ENCODE measurements at regions of chr6 and their contacts with region 1.

Region 1: GRCh38 chr6:166382933-166383801 is at the start of gene MPC1:
- DNase-seq: peak; percentile 95
- ATAC-seq: peak; percentile 93
- H3K4me3 ChIP-seq: peak within 1 kb of the TSS; percentile 70 to 95 (median 83)
- H3K4me3 Mint-ChIP-seq: peak within 1 kb of the TSS; percentile 97
- H3K27ac ChIP-seq: peak within 1 kb of the TSS; percentile 59 to 80
- H3K27ac Mint-ChIP-seq: peak within 1 kb of the TSS; percentile 90
- H3K4me1 ChIP-seq: peaks cover 7 to 11% of the 10 kb centered on the region in 2 donors
- H3K4me1 Mint-ChIP-seq: peaks cover 15% of the 10 kb centered on the region
- H3K27me3 ChIP-seq: no peaks in the 10 kb centered on the region
- H3K27me3 Mint-ChIP-seq: no peaks in the 10 kb centered on the region
- CTCF ChIP-seq: no peak
- total RNA-seq, gene MPC1: 19.6 and 23.9 TPM in 2 replicates

Region 2: GRCh38 chr6:166275714-166276166 is 107.4 kb before region 1 on chr6:
- CTCF ChIA-PET with region 1: interaction called, 33 read pairs
- POLR2A ChIA-PET with region 1: no interaction called
- intact Hi-C with region 1: loop called (anchors 1 kb)
- DNase-seq: peak; percentile 82
- ATAC-seq: peak; percentile 89
- H3K4me3 ChIP-seq: no peak overlapping the region
- H3K4me3 Mint-ChIP-seq: no peak overlapping the region
- H3K27ac ChIP-seq: no peak overlapping the region
- H3K27ac Mint-ChIP-seq: no peak overlapping the region
- H3K4me1 ChIP-seq: peaks cover 0 to 8% of the 10 kb centered on the region in 2 donors
- H3K4me1 Mint-ChIP-seq: peaks cover 14% of the 10 kb centered on the region
- H3K27me3 ChIP-seq: no peaks in the 10 kb centered on the region
- H3K27me3 Mint-ChIP-seq: peaks cover 2% of the 10 kb centered on the region
- CTCF ChIP-seq: peak; percentile 100

Region 3: GRCh38 chr6:166313255-166314070 is 69.7 kb before region 1 on chr6:
- CTCF ChIA-PET with region 1: interaction called, 99 read pairs
- POLR2A ChIA-PET with region 1: interaction called, 3 read pairs
- intact Hi-C with region 1: loop called (anchors 1 kb)
- DNase-seq: peak; percentile 76
- ATAC-seq: peak; percentile 88
- H3K4me3 ChIP-seq: no peak overlapping the region
- H3K4me3 Mint-ChIP-seq: no peak overlapping the region
- H3K27ac ChIP-seq: no peak overlapping the region
- H3K27ac Mint-ChIP-seq: no peak overlapping the region
- H3K4me1 ChIP-seq: peaks cover 3 to 4% of the 10 kb centered on the region in 2 donors
- H3K4me1 Mint-ChIP-seq: peaks cover 4% of the 10 kb centered on the region
- H3K27me3 ChIP-seq: peaks cover 0 to 19% (median 7%) of the 10 kb centered on the region in 4 experiments
- H3K27me3 Mint-ChIP-seq: peaks cover 16% of the 10 kb centered on the region
- CTCF ChIP-seq: peak; percentile 84

Region 4: GRCh38 chr6:166333172-166333995 is 49.8 kb before region 1 on chr6:
- CTCF ChIA-PET with region 1: interaction called, 10 read pairs
- POLR2A ChIA-PET with region 1: no interaction called
- intact Hi-C with region 1: no loop called
- DNase-seq: peak; percentile 52
- ATAC-seq: peak; percentile 61
- H3K4me3 ChIP-seq: peak overlapping the region in 1 of 5 experiments; percentile 26
- H3K4me3 Mint-ChIP-seq: peak overlapping the region; percentile 65
- H3K27ac ChIP-seq: peak overlapping the region; percentile 59 to 77
- H3K27ac Mint-ChIP-seq: peak overlapping the region; percentile 87
- H3K4me1 ChIP-seq: peaks cover 23 to 48% of the 10 kb centered on the region in 2 donors
- H3K4me1 Mint-ChIP-seq: peaks cover 59% of the 10 kb centered on the region
- H3K27me3 ChIP-seq: no peaks in the 10 kb centered on the region
- H3K27me3 Mint-ChIP-seq: no peaks in the 10 kb centered on the region
- CTCF ChIP-seq: no peak

Region 5: GRCh38 chr6:166351715-166352285 is 31.4 kb before region 1 on chr6:
- CTCF ChIA-PET with region 1: interaction called, 11 read pairs
- POLR2A ChIA-PET with region 1: no interaction called
- intact Hi-C with region 1: no loop called
- DNase-seq: peak; percentile 76
- ATAC-seq: peak; percentile 99
- H3K4me3 ChIP-seq: peak overlapping the region in 3 of 5 experiments; percentile 17 to 33 (median 31)
- H3K4me3 Mint-ChIP-seq: peak overlapping the region; percentile 78
- H3K27ac ChIP-seq: peak overlapping the region in 1 of 2 donors; percentile 60
- H3K27ac Mint-ChIP-seq: peak overlapping the region; percentile 42
- H3K4me1 ChIP-seq: peaks cover 6 to 7% of the 10 kb centered on the region in 2 donors
- H3K4me1 Mint-ChIP-seq: peaks cover 10% of the 10 kb centered on the region
- H3K27me3 ChIP-seq: no peaks in the 10 kb centered on the region
- H3K27me3 Mint-ChIP-seq: no peaks in the 10 kb centered on the region
- CTCF ChIP-seq: no peak

Region 6: GRCh38 chr6:166736634-166737033 is 353.5 kb after region 1 on chr6:
- CTCF ChIA-PET with region 1: no interaction called
- POLR2A ChIA-PET with region 1: no interaction called
- intact Hi-C with region 1: no loop called
- DNase-seq: no peak
- ATAC-seq: no peak
- H3K4me3 ChIP-seq: no peak overlapping the region
- H3K4me3 Mint-ChIP-seq: no peak overlapping the region
- H3K27ac ChIP-seq: no peak overlapping the region
- H3K27ac Mint-ChIP-seq: no peak overlapping the region
- H3K4me1 ChIP-seq: no peaks in the 10 kb centered on the region
- H3K4me1 Mint-ChIP-seq: no peaks in the 10 kb centered on the region
- H3K27me3 ChIP-seq: no peaks in the 10 kb centered on the region
- H3K27me3 Mint-ChIP-seq: no peaks in the 10 kb centered on the region
- CTCF ChIP-seq: no peak

Region 7: DNA sequence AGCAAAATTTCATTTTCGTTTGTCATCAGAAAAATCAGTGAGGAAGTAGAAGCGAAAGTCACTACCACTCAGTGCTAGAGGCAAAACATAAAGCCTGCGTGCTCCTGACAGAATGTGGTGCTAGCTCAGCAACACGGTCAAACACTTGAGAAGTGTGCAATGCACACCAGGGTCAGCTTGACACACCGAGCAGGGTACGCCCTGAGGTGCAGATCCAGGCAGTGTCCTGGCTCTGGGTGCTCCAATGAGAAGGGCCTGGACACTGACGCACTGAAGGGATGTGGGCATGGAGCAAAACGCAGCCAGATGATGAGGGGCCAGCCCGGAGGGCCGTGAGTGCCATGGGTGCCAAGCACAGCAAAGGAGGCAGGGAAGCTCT is 567.3 kb after region 1 on chr6:
- CTCF ChIA-PET with region 1: no interaction called
- POLR2A ChIA-PET with region 1: no interaction called
- intact Hi-C with region 1: loop called (anchors 2 kb)
- DNase-seq: peak; percentile 76
- ATAC-seq: peak; percentile 22
- H3K4me3 ChIP-seq: peak overlapping the region; percentile 1 to 60 (median 24)
- H3K4me3 Mint-ChIP-seq: peak overlapping the region; percentile 94
- H3K27ac ChIP-seq: peak overlapping the region; percentile 82 to 94
- H3K27ac Mint-ChIP-seq: peak overlapping the region; percentile 98
- H3K4me1 ChIP-seq: peaks cover 62 to 69% of the 10 kb centered on the region in 2 donors
- H3K4me1 Mint-ChIP-seq: peaks cover 60% of the 10 kb centered on the region
- H3K27me3 ChIP-seq: no peaks in the 10 kb centered on the region
- H3K27me3 Mint-ChIP-seq: no peaks in the 10 kb centered on the region
- CTCF ChIP-seq: no peak